Activated T-helper 1 cell treated with anti-CD3 and anti-CD28 coated beads, Interleukin-12 subunit alpha, Interleukin-12 subunit beta, Interleukin-2, Interleukin-4 antibody, amounts not matched to agents 30 ng/mL and 10 ng/mL and 1 ng/mL, durations not matched to agents 14 hours and 24 hours and 36 hours (primary cell): ENCODE measurements at regions of chr6 and their contacts with region 1.

Region 1: DNA sequence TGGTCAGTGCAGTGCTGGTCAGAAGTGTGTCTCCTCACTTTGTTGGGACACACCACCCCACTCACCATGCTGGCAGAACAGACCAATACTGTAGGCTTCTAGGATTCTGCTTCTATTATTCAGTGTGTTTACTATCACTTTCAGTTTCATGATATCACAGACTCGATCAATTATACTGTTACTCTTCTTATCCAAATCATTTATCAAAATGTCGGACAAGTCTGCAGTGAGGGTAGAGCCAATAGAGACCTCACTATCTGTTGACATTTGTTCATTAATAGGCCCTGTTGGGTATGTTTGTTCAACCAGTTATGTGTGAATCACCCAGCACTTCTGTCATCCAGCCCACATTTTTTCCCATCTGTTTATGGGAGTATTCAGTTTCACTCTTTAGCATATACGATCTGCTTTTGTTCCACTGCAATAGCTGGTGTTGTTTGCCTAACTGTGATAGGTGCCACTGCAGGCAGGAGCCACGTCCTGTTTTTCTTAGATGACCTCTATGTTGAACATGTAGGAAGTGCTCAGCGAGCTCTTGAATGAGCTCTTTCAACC is 140.1 kb downstream of the NRN1 start:
- DNase-seq: no peak
- H3K4me3 Mint-ChIP-seq: peak overlapping the region; percentile 69
- H3K27ac Mint-ChIP-seq: peak overlapping the region; percentile 88
- H3K4me1 Mint-ChIP-seq: peaks cover 39% of the 10 kb centered on the region
- H3K27me3 Mint-ChIP-seq: no peaks in the 10 kb centered on the region

Region 2: GRCh38 chr6:4637691-4638433 is 1228.8 kb before region 1 on chr6:
- intact Hi-C with region 1: loop called (anchors 5 kb)
- DNase-seq: peak; percentile 8
- H3K4me3 Mint-ChIP-seq: no peak overlapping the region
- H3K27ac Mint-ChIP-seq: peak overlapping the region; percentile 52
- H3K4me1 Mint-ChIP-seq: peaks cover 11% of the 10 kb centered on the region
- H3K27me3 Mint-ChIP-seq: peaks cover 4% of the 10 kb centered on the region

Region 3: DNA sequence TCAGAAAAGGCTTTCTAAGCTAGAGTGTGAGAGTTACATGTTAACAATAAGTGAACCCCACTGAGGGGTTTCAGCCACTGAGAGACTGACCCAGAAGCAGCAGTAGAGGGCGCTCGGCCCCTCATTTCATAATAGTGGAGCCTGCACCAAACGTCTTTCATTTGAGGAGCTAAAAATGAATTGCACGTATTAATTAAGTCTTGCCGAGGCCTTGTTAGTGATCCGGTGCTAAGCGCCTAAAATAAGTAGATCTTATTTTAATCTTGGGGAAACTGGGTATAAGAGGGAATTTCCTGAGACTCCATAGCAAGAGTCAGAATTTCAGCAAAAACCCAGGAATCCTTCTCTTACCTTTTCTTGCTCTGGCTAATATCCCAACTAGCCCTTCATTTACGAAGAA is 395.6 kb before region 1 on chr6:
- intact Hi-C with region 1: loop called (anchors 5 kb)
- DNase-seq: peak; percentile 18
- H3K4me3 Mint-ChIP-seq: no peak overlapping the region
- H3K27ac Mint-ChIP-seq: no peak overlapping the region
- H3K4me1 Mint-ChIP-seq: no peaks in the 10 kb centered on the region
- H3K27me3 Mint-ChIP-seq: no peaks in the 10 kb centered on the region

Region 4: GRCh38 chr6:5832668-5833067 is 34.0 kb before region 1 on chr6:
- intact Hi-C with region 1: loop called (anchors 5 kb)
- DNase-seq: no peak
- H3K4me3 Mint-ChIP-seq: peak overlapping the region; percentile 21
- H3K27ac Mint-ChIP-seq: peak overlapping the region; percentile 63
- H3K4me1 Mint-ChIP-seq: peaks cover 25% of the 10 kb centered on the region
- H3K27me3 Mint-ChIP-seq: peaks cover 1% of the 10 kb centered on the region

Region 5: DNA sequence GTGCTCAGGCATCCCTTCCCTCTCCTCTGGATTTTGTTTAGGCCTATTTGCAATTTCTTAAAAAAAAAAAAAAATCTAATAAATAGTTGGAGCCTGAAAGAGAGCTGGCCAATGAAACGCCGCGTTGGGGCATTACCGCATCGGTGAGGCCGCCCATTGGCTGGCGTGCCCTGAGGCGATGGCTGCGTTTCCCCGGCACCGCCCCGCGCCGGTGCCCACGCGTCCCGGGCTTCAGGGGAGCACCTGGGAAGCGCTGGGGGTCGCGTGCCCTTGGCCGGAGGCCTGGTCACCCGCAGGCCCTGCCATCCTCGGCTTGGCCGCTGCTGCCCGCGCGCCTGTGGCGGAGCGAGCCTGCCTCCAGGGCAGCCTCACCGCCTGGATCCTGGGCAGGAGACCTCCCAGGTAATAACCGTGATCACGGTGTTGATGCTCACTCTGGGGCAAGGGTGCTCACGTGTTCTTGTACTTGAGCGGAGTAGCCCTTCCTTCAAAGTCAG is 15.3 kb before region 1 on chr6:
- intact Hi-C with region 1: loop called (anchors 1 kb)
- DNase-seq: peak; percentile 62
- H3K4me3 Mint-ChIP-seq: peak overlapping the region; percentile 78
- H3K27ac Mint-ChIP-seq: no peak overlapping the region
- H3K4me1 Mint-ChIP-seq: peaks cover 18% of the 10 kb centered on the region
- H3K27me3 Mint-ChIP-seq: peaks cover 12% of the 10 kb centered on the region

Region 6: DNA sequence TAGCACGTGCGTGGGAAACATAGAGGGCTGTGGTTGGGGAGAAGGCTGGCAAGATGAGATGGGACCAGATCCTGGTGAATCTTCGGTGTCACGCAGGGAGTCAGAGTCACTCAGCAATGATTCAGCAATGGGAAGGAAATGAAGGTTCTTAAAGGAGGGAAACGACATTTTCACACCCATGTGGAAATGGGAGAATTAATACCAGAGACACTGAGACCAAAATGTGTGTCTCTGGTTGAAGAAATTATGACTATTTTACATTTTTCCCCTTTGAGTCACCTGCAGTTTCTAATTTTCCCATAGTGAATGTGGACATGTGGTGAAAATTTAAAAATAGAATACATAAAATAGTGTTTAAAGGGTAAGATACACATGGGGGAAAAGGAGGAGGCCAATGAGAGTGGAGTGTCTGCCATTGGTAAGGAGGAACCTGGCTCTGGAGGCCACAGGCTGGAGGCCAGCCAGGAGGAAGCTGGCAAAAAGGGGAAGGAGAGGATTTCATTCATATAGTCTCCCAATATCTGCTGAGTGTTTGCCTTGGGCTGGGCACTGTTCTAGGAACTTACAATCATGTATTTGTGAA is 122.6 kb after region 1 on chr6:
- intact Hi-C with region 1: loop called (anchors 5 kb)
- DNase-seq: no peak
- H3K4me3 Mint-ChIP-seq: no peak overlapping the region
- H3K27ac Mint-ChIP-seq: no peak overlapping the region
- H3K4me1 Mint-ChIP-seq: peaks cover 41% of the 10 kb centered on the region
- H3K27me3 Mint-ChIP-seq: peaks cover 48% of the 10 kb centered on the region

Region 7: GRCh38 chr6:6105472-6106036 is 238.9 kb after region 1 on chr6:
- intact Hi-C with region 1: no loop called
- DNase-seq: no peak
- H3K4me3 Mint-ChIP-seq: no peak overlapping the region
- H3K27ac Mint-ChIP-seq: no peak overlapping the region
- H3K4me1 Mint-ChIP-seq: no peaks in the 10 kb centered on the region
- H3K27me3 Mint-ChIP-seq: peaks cover 2% of the 10 kb centered on the region